ENCODE measurements at regions of chr7 and their contacts with region 1.

Region 1: GRCh38 chr7:44595934-44596635 is 10.3 kb upstream of the OGDH start:
- DNase-seq: no peak
- H3K4me3 ChIP-seq: no peak overlapping the region
- H3K27ac ChIP-seq: no peak overlapping the region
- H3K4me1 ChIP-seq: no peaks in the 10 kb centered on the region
- H3K27me3 ChIP-seq: no peaks in the 10 kb centered on the region
- CTCF ChIP-seq: no peak
- EP300 ChIP-seq: no peak
- POLR2A ChIP-seq: no peak

Region 2: DNA sequence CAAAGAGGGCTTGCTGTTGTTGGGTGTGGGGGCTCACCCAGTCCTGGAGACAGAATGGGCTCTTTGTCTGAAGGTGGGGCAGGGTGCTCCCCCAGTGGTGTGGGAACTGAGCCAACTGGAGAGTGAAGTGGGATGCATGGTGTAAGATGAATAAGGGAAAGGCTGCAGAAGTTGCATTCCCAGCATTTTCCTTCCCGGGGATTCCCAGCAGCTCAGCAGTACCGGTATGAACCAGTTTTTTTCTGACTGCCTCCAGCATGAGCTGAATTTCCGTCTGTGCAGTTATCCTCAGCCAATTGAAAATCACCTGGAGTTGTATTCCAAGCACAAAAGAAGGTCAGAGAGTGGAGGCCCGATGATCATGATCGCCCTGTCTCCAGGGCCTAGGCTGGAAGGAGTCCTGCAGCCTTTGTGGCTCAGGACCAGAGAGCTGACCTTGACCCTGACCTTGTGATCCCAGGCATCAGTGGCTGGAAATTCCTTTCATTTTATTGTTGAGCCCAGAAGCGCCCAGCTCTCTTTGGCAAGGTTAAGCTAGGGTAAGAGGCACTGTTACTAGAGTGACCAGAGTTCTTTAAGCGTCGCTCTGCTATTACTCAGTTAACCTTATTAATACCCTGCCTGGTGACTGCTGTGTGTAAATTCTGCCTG is 43.7 kb after region 1 on chr7:
- in situ Hi-C with region 1: loop called in 1 of 4 experiments (anchors 10 kb)
- intact Hi-C with region 1: no loop called
- DNase-seq: no peak
- H3K4me3 ChIP-seq: no peak overlapping the region
- H3K27ac ChIP-seq: peak overlapping the region; percentile 87 to 89 (median 88)
- H3K4me1 ChIP-seq: peaks cover 34 to 60% (median 52%) of the 10 kb centered on the region in 4 donors
- H3K27me3 ChIP-seq: no peaks in the 10 kb centered on the region
- CTCF ChIP-seq: no peak
- EP300 ChIP-seq: no peak
- POLR2A ChIP-seq: no peak

Region 3: GRCh38 chr7:44750921-44751571 is 155.0 kb after region 1 on chr7:
- in situ Hi-C with region 1: loop called in 3 of 4 experiments (anchors 10 to 25 kb)
- intact Hi-C with region 1: no loop called
- DNase-seq: peak; percentile 44
- H3K4me3 ChIP-seq: no peak overlapping the region
- H3K27ac ChIP-seq: peak overlapping the region; percentile 22 to 100 (median 37)
- H3K4me1 ChIP-seq: peaks cover 28 to 53% (median 35%) of the 10 kb centered on the region in 4 donors
- H3K27me3 ChIP-seq: no peaks in the 10 kb centered on the region
- CTCF ChIP-seq: no peak
- EP300 ChIP-seq: no peak
- POLR2A ChIP-seq: no peak

Region 4: GRCh38 chr7:44847508-44847920 is 251.4 kb after region 1 on chr7:
- in situ Hi-C with region 1: loop called in 3 of 4 experiments (anchors 10 to 25 kb)
- intact Hi-C with region 1: no loop called
- DNase-seq: peak; percentile 91
- H3K4me3 ChIP-seq: peak overlapping the region; percentile 62 to 86 (median 71)
- H3K27ac ChIP-seq: peak overlapping the region; percentile 95 to 98 (median 96)
- H3K4me1 ChIP-seq: peaks cover 9 to 41% (median 22%) of the 10 kb centered on the region in 4 donors
- H3K27me3 ChIP-seq: no peaks in the 10 kb centered on the region
- CTCF ChIP-seq: peak; percentile 77 to 90 (median 87)
- EP300 ChIP-seq: no peak
- POLR2A ChIP-seq: peak; percentile 59

Region 5: GRCh38 chr7:44921607-44922359 is 325.7 kb after region 1 on chr7:
- in situ Hi-C with region 1: loop called in 2 of 4 experiments (anchors 10 to 25 kb)
- intact Hi-C with region 1: no loop called
- DNase-seq: peak; percentile 91
- H3K4me3 ChIP-seq: no peak overlapping the region
- H3K27ac ChIP-seq: no peak overlapping the region
- H3K4me1 ChIP-seq: peaks cover 0 to 3% (median 0%) of the 10 kb centered on the region in 4 donors
- H3K27me3 ChIP-seq: no peaks in the 10 kb centered on the region
- CTCF ChIP-seq: peak; percentile 82 to 92 (median 85)
- EP300 ChIP-seq: no peak
- POLR2A ChIP-seq: no peak

Region 6: DNA sequence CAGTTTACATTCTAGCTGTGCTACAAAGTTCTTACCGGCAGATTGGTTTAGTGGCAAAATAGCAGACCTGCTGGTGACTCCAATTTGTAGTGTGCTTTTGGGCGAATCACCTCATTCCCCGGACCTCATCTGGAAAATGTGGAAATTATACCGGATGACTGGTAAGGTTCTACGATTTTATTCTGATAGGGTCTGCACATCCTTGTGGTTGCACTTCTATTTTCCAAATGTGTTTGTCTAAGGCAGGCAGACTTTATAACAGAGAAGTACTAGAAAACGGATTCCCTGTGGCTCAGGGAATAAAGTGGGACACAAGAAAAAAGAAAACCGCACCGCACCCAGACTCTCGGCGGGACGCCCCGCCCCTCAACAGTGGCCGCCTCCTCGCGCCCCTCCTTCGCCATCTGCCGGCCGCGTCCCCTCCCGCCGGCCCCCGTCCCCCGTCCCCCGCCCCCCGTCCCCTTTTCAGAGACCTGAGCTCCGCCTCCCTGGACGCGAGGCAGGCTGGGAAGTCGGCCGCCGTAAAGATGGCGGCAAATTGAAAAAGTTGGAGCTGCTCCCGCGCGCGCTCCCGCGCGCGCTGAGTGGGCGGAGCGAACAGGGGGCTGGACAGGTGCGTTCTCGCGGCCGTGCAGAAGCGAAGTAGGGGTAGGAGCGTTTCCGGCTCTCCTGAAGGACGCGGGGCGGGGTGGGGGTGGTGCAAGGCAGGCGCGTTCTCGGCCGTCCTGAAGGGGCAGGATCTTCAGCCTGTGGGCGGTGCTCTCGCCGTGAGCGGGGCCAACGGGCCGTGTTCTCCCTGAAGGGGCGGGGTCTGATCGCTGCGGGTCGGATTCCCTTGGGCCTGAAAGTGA is 403.4 kb after region 1 on chr7:
- in situ Hi-C with region 1: no loop called
- intact Hi-C with region 1: loop called (anchors 10 kb)
- DNase-seq: peak; percentile 100
- H3K4me3 ChIP-seq: peak overlapping the region; percentile 61 to 92 (median 76)
- H3K27ac ChIP-seq: peak overlapping the region; percentile 91 to 98 (median 96)
- H3K4me1 ChIP-seq: peaks cover 6 to 34% (median 17%) of the 10 kb centered on the region in 4 donors
- H3K27me3 ChIP-seq: no peaks in the 10 kb centered on the region
- CTCF ChIP-seq: peak in 1 of 5 experiments; percentile 14
- EP300 ChIP-seq: no peak
- POLR2A ChIP-seq: peak; percentile 27

Measured in transverse colon (tissue), 4 donors.